HEK293 (cell line): ENCODE measurements at regions of chr3 and their contacts with region 1.

Region 1: GRCh38 chr3:118884748-118885206 is 149.9 kb downstream of the IGSF11 start:
- H3K4me3 ChIP-seq: no peak overlapping the region
- H3K27ac ChIP-seq: no peak overlapping the region
- H3K4me1 ChIP-seq: no peaks in the 10 kb centered on the region
- CTCF ChIP-seq: peak; percentile 32; the same call in 1 of the 2 replicates

Region 2: GRCh38 chr3:118842147-118842863 is 42.5 kb before region 1 on chr3:
- CTCF ChIA-PET with region 1: no interaction called
- POLR2A ChIA-PET with region 1: no interaction called
- H3K4me3 ChIP-seq: no peak overlapping the region
- H3K27ac ChIP-seq: no peak overlapping the region
- H3K4me1 ChIP-seq: no peaks in the 10 kb centered on the region
- CTCF ChIP-seq: no peak

Region 3: GRCh38 chr3:118907909-118908308 is 23.1 kb after region 1 on chr3:
- CTCF ChIA-PET with region 1: interaction called, 13 read pairs
- POLR2A ChIA-PET with region 1: no interaction called
- H3K4me3 ChIP-seq: no peak overlapping the region
- H3K27ac ChIP-seq: no peak overlapping the region
- H3K4me1 ChIP-seq: no peaks in the 10 kb centered on the region
- CTCF ChIP-seq: no peak

Region 4: GRCh38 chr3:119085073-119085439 is 200.3 kb after region 1 on chr3:
- CTCF ChIA-PET with region 1: interaction called, 13 read pairs
- POLR2A ChIA-PET with region 1: no interaction called
- H3K4me3 ChIP-seq: no peak overlapping the region
- H3K27ac ChIP-seq: no peak overlapping the region
- H3K4me1 ChIP-seq: no peaks in the 10 kb centered on the region
- CTCF ChIP-seq: no peak

Region 5: DNA sequence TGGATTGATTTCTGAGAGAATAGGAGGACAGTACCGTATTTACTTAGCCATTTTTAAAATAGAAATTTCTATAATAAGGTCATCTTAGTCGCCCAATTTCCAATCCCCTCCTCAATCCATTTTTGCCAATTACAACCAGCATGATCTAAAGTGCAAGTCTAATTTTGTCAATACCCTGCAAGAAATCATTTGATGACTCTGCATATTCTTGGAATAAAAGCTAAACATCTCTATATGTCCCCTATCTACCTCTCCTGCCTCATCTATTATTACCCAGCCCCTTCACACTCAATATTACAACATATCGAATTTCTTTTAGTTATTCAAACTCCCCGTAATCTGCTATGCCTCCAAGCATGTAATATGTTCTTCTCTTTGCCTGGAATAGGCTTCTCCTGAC is 219.3 kb after region 1 on chr3:
- CTCF ChIA-PET with region 1: interaction called, 197 read pairs
- POLR2A ChIA-PET with region 1: no interaction called
- H3K4me3 ChIP-seq: no peak overlapping the region
- H3K27ac ChIP-seq: no peak overlapping the region
- H3K4me1 ChIP-seq: no peaks in the 10 kb centered on the region
- CTCF ChIP-seq: no peak

Region 6: GRCh38 chr3:119310071-119310470 is 425.3 kb after region 1 on chr3:
- CTCF ChIA-PET with region 1: no interaction called
- POLR2A ChIA-PET with region 1: no interaction called
- H3K4me3 ChIP-seq: no peak overlapping the region
- H3K27ac ChIP-seq: no peak overlapping the region
- H3K4me1 ChIP-seq: no peaks in the 10 kb centered on the region
- CTCF ChIP-seq: no peak